ENCODE measurements at regions of chr1 and their contacts with region 1.

Region 1: DNA sequence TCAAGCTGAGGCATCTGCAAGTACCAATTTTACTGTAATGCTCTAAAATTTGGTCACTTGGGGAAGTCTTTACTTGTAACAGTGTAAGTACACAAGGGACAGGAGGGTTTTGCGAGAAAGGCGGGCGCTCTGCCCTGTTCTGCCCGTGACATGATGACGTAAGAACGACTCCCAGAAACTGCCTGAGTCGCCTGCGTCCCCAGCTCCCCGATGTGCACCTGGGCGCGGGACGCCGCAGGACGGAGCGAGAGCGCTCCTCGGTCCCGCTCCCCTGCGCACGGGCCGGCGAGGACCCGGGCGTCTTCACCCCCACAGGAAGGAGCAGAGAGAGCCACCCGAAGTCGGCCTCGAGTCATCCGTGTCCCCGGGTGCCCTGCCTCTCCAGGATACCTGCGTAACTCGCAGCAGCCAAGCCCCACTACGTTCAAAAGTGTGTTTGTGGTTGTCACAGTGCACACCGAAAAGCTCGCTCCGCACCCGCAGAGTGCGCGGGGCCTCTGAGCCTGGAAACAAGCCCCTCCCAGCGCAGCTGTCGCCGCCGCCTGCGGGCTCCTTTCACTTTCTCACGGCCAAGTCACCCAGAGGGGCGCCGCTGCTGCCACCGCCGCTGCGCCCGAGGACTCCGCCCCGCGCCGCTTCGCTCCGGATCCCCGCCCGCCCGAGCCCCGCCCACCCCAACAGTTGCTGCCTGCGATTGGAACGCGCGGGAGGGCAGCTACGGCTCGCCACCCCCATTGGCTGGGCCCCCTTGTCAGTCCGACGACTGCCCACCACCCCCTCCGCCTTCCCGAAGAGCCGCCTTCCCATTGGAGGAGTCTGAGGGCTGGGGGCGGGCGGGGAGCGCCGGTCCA is 3.2 kb upstream of the ZBTB18 start:
- DNase-seq: peak; percentile 94
- H3K4me3 Mint-ChIP-seq: peak overlapping the region; percentile 95
- H3K27ac Mint-ChIP-seq: peak overlapping the region; percentile 91
- H3K4me1 Mint-ChIP-seq: peaks cover 25% of the 10 kb centered on the region
- H3K27me3 Mint-ChIP-seq: peaks cover 53% of the 10 kb centered on the region

Region 2: DNA sequence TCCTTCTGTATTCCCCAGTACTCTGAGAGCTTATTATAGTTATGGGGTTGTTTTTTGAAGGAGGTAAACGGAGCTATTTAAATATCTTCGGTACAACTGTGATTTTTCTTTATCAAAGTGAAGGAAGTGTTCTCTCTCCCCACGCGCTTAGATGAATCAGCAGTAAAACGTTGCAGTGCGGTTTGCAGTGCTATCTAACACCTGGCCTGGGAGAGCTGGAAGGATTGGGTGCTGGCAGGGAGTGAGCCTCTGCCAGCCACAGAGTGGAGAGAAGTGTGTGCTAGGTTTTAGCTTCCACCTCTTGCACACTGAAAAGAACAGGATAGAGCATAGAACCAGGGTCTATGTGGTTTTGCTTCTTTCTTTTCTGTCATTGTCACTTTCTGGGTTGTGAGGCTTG is 626.1 kb before region 1 on chr1:
- intact Hi-C with region 1: loop called (anchors 5 kb)
- DNase-seq: peak; percentile 51
- H3K4me3 Mint-ChIP-seq: peak overlapping the region; percentile 49
- H3K27ac Mint-ChIP-seq: peak overlapping the region; percentile 43
- H3K4me1 Mint-ChIP-seq: peaks cover 46% of the 10 kb centered on the region
- H3K27me3 Mint-ChIP-seq: no peaks in the 10 kb centered on the region

Region 3: DNA sequence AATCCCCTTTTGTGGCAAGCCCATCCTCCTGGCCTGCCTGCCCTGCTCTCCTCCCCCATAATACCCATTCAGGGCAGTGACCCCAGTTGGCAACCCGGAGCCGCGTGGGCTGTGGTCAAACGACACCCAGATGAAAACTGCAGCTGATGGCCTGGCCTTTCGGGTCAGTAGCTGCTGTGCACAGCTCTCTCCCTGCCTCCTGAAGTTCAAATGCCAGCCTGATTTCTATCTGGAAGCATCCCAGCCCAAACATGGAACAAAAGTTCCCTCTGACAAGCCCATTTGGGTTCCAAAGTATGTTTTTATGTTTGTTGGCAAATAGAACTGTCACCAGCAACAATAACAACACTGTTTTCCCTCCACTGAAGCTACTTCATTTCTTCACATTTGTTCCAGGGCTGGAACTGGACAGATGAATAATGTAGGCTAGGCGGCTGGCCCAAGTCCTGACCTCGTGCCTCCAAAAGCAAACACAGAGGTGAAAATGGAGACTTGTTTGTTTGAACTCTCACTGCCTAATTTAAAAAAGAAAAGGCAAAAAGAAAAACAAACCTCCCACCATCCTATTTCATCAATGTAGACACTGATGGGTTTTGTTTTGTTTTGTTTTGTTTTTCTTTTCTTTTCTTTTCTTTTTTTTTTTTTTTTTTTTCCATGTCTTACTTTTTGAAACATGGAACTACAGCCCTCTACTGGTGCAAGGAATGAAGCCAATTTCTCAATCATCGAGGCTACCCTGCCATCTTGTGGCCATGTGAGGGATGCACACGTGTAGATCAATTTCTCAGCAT is 224.8 kb after region 1 on chr1:
- intact Hi-C with region 1: loop called (anchors 10 kb)
- DNase-seq: peak; percentile 48
- H3K4me3 Mint-ChIP-seq: no peak overlapping the region
- H3K27ac Mint-ChIP-seq: no peak overlapping the region
- H3K4me1 Mint-ChIP-seq: peaks cover 6% of the 10 kb centered on the region
- H3K27me3 Mint-ChIP-seq: peaks cover 4% of the 10 kb centered on the region

Region 4: DNA sequence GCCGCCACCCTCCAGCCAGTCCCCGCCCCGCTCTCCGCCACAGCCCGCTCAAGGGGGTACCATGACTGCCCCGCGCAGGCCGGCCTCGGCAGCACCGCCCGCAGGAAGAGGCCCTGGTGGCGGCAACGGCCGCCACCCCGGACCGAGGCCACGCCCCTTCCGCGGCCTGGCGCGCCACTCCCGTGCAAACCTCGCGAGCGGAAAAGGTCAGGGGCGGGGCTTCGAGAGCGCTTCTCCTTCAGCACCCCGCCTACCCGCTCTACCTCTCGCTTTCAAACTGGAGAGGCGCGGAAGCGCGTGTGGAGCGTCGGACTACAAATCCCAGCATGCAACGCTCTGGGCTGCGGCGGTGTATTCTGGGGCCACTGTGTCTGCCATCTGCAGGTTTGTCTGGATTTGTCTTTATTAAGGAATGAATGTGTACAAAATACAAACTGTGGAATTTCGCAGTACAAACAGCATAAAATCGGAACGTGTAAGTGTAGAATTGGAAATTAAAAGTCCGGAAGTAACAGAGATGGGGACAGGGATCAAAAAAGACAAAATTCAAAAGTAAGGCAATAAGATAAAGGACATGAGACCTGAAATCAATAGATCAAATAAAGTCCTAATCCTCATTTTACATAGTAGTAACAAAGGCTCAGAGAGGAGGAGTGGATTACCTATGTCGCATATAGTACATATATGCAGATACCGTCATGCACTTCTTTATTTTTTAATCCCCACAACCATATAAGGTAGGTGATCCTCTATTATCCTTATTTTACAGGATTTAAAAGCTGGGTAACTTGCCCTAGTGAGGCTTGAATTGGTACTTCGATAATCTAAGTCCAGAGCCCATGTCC is 404.3 kb after region 1 on chr1:
- intact Hi-C with region 1: loop called (anchors 5 kb)
- DNase-seq: peak; percentile 98
- H3K4me3 Mint-ChIP-seq: peak overlapping the region; percentile 95
- H3K27ac Mint-ChIP-seq: peak overlapping the region; percentile 96
- H3K4me1 Mint-ChIP-seq: peaks cover 34% of the 10 kb centered on the region
- H3K27me3 Mint-ChIP-seq: no peaks in the 10 kb centered on the region

Measured in activated T-helper 2 cell treated with anti-CD3 and anti-CD28 coated beads, Interferon-gamma antibody, Interleukin-2, Interleukin-4, amounts not matched to agents 10 μg/mL and 5 μg/mL and 100 μg/mL, durations not matched to agents 14 hours and 24 hours and 36 hours (primary cell).